Natural killer cell (primary cell): ENCODE measurements at regions of chr3 and their contacts with region 1.

Region 1: GRCh38 chr3:9552252-9552999 is 1.2 kb downstream of the LHFPL4 start:
- DNase-seq: peak; percentile 23 to 58
- ATAC-seq: peak; percentile 29 to 65 (median 55)
- H3K4me3 ChIP-seq: no peak overlapping the region
- H3K4me3 Mint-ChIP-seq: no peak overlapping the region
- H3K27ac ChIP-seq: no peak overlapping the region
- H3K27ac Mint-ChIP-seq: no peak overlapping the region
- H3K4me1 ChIP-seq: no peaks in the 10 kb centered on the region
- H3K4me1 Mint-ChIP-seq: peaks cover 10 to 12% of the 10 kb centered on the region in 2 donors
- H3K27me3 ChIP-seq: peaks cover 24% of the 10 kb centered on the region
- H3K27me3 Mint-ChIP-seq: peaks cover 45 to 64% of the 10 kb centered on the region in 2 donors
- CTCF ChIP-seq: no peak

Region 2: GRCh38 chr3:9536212-9536611 is 16.2 kb before region 1 on chr3:
- intact Hi-C with region 1: loop called (anchors 1 kb)
- DNase-seq: no peak
- ATAC-seq: no peak
- H3K4me3 ChIP-seq: no peak overlapping the region
- H3K4me3 Mint-ChIP-seq: no peak overlapping the region
- H3K27ac ChIP-seq: no peak overlapping the region
- H3K27ac Mint-ChIP-seq: no peak overlapping the region
- H3K4me1 ChIP-seq: no peaks in the 10 kb centered on the region
- H3K4me1 Mint-ChIP-seq: no peaks in the 10 kb centered on the region
- H3K27me3 ChIP-seq: peaks cover 3% of the 10 kb centered on the region
- H3K27me3 Mint-ChIP-seq: peaks cover 3 to 8% of the 10 kb centered on the region in 2 donors
- CTCF ChIP-seq: no peak